ENCODE measurements at regions of chr6 and their contacts with region 1.

Region 1: DNA sequence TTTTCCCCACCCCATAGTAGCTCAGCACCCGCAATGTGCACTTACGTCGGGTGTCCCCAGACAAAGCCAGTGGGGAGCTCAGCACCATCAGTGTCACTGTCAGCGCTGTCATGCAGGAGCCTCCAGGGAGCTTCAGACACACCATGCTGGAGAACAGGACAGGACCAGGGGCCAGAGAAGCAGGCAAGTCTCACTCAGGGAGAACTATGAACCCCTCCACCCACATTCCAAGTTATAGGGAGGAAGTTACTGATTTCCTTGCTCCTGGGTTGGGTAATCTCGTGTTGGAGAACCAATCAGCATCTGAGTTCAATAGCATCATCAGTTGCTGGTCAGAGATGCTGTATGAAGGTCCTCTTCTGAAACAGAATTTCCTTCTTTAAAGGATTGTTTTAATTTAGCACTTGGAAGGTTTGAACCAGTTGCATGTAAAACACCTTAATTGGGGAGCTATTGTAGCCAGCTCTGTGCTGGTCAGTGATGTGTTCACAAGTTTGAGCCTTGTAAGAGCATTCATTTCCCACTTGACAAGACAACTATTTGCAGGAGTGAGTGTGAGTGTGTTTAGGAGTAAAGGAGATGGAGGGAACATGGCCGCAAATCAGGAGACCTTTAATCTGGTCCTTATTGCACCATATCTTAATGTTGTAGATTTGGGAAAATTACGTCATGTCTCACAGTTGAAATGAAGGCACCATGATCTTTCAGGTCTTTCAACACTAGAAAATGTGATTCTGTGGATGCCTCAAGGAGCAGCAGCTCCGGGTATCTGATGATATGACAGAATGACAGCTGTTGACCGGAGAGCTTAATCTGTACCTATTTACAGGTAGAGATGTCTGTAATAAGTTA is at the start of gene HLA-DRB1:
- DNase-seq: peak in 3 of 9 donors; percentile 22 to 59 (median 30)
- ATAC-seq: peak; percentile 96
- H3K4me3 ChIP-seq: peak within 1 kb of the TSS; percentile 48
- H3K4me3 Mint-ChIP-seq: peak within 1 kb of the TSS in 8 of 10 donors; percentile 13 to 83 (median 69)
- H3K27ac ChIP-seq: no peak within 1 kb of the TSS
- H3K27ac Mint-ChIP-seq: peak within 1 kb of the TSS in 2 of 9 donors; percentile 15 to 77
- H3K4me1 ChIP-seq: no peaks in the 10 kb centered on the region
- H3K4me1 Mint-ChIP-seq: peaks cover 0 to 25% (median 6%) of the 10 kb centered on the region in 7 donors
- H3K27me3 ChIP-seq: no peaks in the 10 kb centered on the region
- H3K27me3 Mint-ChIP-seq: peaks cover 0 to 5% (median 4%) of the 10 kb centered on the region in 5 donors
- total RNA-seq, gene HLA-DRB1: 16.4 to 229 (median 52.1) TPM

Region 2: DNA sequence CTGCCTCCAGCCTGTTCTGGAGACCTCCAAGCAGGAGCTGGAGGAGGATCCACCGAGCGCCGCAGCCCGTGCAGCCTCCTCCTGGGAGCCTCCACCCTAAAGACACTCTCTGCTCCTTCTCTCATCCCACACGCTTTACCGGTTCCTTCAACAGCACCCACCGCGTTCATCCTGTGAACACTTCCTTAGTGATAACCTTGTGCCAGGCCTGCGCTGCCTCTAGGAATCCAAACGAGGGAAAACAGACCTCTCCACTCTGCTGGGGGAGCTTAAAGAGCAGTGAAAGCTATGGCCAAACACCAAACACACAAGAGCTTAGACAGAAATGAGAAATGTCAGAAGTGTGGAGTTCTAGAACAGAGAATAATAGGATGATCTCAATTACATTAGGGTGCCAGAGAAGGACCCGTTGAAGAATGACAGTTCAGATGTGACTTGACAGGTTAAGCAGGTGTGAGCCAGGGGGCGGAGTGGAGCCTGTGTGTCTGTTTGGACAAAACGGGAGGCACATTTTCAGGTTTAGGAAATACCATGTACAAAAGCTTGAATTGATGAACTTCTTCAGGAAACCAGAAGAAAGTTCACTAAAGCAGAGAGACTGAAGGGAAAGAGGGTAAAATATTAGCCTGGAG is 31.3 kb before region 1 on chr6:
- CTCF ChIA-PET with region 1: no interaction called
- POLR2A ChIA-PET with region 1: no interaction called
- intact Hi-C with region 1: loop called in 1 of 2 experiments (anchors 2 kb)
- DNase-seq: no peak
- ATAC-seq: no peak
- H3K4me3 ChIP-seq: no peak overlapping the region
- H3K4me3 Mint-ChIP-seq: peak overlapping the region in 4 of 10 donors; percentile 7 to 40 (median 28)
- H3K27ac ChIP-seq: no peak overlapping the region
- H3K27ac Mint-ChIP-seq: no peak overlapping the region
- H3K4me1 ChIP-seq: no peaks in the 10 kb centered on the region
- H3K4me1 Mint-ChIP-seq: peaks cover 0 to 6% (median 0%) of the 10 kb centered on the region in 7 donors
- H3K27me3 ChIP-seq: no peaks in the 10 kb centered on the region
- H3K27me3 Mint-ChIP-seq: peaks cover 0 to 23% (median 5%) of the 10 kb centered on the region in 5 donors

Region 3: DNA sequence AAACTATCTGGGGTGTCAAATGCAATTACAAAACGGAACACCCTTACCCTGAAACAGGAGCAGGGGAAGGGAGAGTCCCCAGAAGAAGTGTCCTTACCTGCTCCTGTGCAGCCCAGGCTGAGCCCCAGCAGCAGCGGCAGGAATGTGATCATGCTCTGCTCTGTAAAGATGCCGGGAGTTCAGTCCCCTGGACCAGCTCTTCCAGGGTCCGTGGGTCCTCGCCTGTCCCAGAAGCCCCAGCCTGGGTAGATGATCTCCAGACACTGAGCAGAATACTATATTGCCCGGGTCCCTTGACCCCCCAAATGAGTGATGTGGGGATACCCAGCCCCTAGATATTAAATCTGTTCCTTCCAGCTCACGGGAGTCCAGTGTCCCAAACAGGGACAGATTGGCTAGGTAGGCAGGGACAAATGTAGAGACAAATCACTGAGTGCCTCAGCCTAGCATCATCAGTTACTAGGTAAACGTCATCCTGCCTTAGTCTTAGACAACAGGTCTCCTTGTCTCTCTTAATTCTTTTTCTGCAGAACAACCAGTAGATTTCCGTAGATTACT is 350.9 kb after region 1 on chr6 and contains the start of gene HLA-DMB:
- CTCF ChIA-PET with region 1: no interaction called
- POLR2A ChIA-PET with region 1: no interaction called
- intact Hi-C with region 1: no loop called
- DNase-seq: peak in 7 of 9 donors; percentile 64 to 80 (median 74)
- ATAC-seq: peak; percentile 86
- H3K4me3 ChIP-seq: peak within 1 kb of the TSS; percentile 66
- H3K4me3 Mint-ChIP-seq: peak within 1 kb of the TSS; percentile 85 to 97 (median 94)
- H3K27ac ChIP-seq: peak within 1 kb of the TSS; percentile 75
- H3K27ac Mint-ChIP-seq: peak within 1 kb of the TSS; percentile 95 to 98 (median 96)
- H3K4me1 ChIP-seq: peaks cover 50 to 55% of the 10 kb centered on the region in 2 donors
- H3K4me1 Mint-ChIP-seq: peaks cover 55 to 67% (median 62%) of the 10 kb centered on the region in 7 donors
- H3K27me3 ChIP-seq: no peaks in the 10 kb centered on the region
- H3K27me3 Mint-ChIP-seq: peaks cover 0 to 7% (median 0%) of the 10 kb centered on the region in 5 donors
- total RNA-seq, gene HLA-DMB: 7.8 to 82.5 (median 9.1) TPM

Region 4: DNA sequence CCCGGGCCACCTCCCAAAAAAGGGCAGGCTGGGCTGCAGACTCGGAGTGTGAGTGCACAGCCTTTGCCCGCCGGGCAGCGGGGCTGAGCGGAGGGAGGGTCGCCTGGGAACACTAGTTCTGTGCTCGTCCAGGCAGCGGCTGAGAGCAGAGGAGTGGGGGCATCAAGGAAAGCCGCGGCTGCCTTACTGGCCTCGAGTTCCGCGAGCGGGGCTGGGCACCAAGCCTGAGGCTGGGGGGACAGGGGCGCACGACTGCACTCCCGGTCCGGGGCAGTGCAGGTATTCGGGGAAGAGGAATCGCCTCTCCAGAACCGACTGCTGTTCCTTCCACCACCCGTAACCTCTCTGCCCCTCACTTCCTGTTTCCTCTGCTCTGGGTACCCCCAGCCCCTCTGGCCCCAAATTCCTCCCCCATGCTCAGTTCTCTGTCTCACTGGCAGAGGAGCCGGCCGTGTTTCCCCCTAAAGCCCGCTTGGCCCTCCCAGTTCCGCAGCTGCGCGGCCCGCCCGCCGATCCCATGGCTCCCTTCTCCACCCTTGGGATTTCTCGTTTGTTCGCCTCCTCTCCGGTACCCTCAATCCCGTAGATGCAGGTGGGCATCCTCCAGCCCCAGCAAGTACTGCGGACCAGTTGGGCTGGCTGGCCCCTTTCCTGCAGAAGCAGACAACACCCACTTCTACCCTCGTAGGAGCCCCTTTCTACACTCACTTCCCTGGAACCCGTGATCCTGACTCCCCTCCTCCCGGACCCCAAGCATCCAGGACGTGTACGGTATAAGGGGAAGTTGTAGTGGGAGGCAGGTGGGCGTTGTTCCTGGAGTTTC is 623.6 kb after region 1 on chr6:
- CTCF ChIA-PET with region 1: no interaction called
- POLR2A ChIA-PET with region 1: no interaction called
- intact Hi-C with region 1: no loop called
- DNase-seq: peak in 3 of 9 donors; percentile 24 to 31 (median 25)
- ATAC-seq: peak; percentile 24
- H3K4me3 ChIP-seq: peak overlapping the region; percentile 47
- H3K4me3 Mint-ChIP-seq: peak overlapping the region; percentile 69 to 88 (median 80)
- H3K27ac ChIP-seq: no peak overlapping the region
- H3K27ac Mint-ChIP-seq: peak overlapping the region in 3 of 9 donors; percentile 15 to 74 (median 28)
- H3K4me1 ChIP-seq: peaks cover 3 to 23% of the 10 kb centered on the region in 2 donors
- H3K4me1 Mint-ChIP-seq: peaks cover 29 to 43% (median 34%) of the 10 kb centered on the region in 7 donors
- H3K27me3 ChIP-seq: peaks cover 0 to 3% of the 10 kb centered on the region in 2 donors
- H3K27me3 Mint-ChIP-seq: peaks cover 4 to 42% (median 12%) of the 10 kb centered on the region in 5 donors

Measured in naive thymus-derived CD4-positive, alpha-beta T cell (primary cell).